ENCODE measurements at regions of chr13 and their contacts with region 1.

Region 1: DNA sequence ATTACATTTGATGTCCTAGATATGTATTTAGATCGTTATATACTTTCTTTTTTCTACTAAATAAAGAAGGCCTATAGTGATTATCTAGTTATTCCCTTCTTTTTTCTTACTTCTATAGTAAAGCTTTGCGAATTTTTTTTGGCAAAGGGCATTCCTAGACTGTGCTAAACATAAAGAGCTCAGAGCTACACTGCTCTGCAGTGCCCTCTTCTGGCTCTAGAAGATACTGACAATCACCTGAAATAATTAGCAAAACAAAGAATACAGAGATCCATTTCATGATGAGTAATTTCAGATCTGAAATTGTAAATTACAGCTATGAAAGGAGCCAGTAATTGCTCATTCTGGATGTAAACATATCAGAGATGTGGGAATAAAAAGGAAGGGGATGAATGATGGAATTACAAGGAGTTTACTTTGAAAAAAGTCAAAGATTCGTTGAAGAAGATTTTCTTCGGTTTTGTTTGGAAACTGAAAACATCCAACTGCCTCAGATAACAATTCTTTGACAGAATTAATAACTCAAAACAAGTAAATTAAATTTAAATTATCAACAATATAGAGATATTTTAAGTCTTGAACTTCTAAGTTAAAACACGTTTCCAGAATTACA is 288.5 kb downstream of the NALCN start:
- DNase-seq: no peak
- H3K4me3 ChIP-seq: no peak overlapping the region
- H3K27ac ChIP-seq: no peak overlapping the region
- H3K4me1 ChIP-seq: no peaks in the 10 kb centered on the region
- H3K27me3 ChIP-seq: peaks cover 4% of the 10 kb centered on the region
- CTCF ChIP-seq: peak; percentile 30 to 64 (median 61)
- EP300 ChIP-seq: no peak
- POLR2A ChIP-seq: no peak

Region 2: GRCh38 chr13:100680131-100680530 is 447.7 kb before region 1 on chr13:
- in situ Hi-C with region 1: no loop called
- intact Hi-C with region 1: no loop called
- DNase-seq: no peak
- H3K4me3 ChIP-seq: no peak overlapping the region
- H3K27ac ChIP-seq: no peak overlapping the region
- H3K4me1 ChIP-seq: peaks cover 0 to 6% (median 1%) of the 10 kb centered on the region in 4 donors
- H3K27me3 ChIP-seq: peaks cover 8% of the 10 kb centered on the region
- CTCF ChIP-seq: no peak
- EP300 ChIP-seq: no peak
- POLR2A ChIP-seq: no peak

Region 3: GRCh38 chr13:100721885-100722512 is 405.8 kb before region 1 on chr13:
- in situ Hi-C with region 1: no loop called
- intact Hi-C with region 1: loop called (anchors 5 kb)
- DNase-seq: peak; percentile 50
- H3K4me3 ChIP-seq: no peak overlapping the region
- H3K27ac ChIP-seq: no peak overlapping the region
- H3K4me1 ChIP-seq: no peaks in the 10 kb centered on the region
- H3K27me3 ChIP-seq: no peaks in the 10 kb centered on the region
- CTCF ChIP-seq: peak; percentile 41 to 65 (median 61)
- EP300 ChIP-seq: no peak
- POLR2A ChIP-seq: no peak

Measured in transverse colon (tissue), 4 donors.